ENCODE measurements at regions of chr3 and their contacts with region 1.

Region 1: DNA sequence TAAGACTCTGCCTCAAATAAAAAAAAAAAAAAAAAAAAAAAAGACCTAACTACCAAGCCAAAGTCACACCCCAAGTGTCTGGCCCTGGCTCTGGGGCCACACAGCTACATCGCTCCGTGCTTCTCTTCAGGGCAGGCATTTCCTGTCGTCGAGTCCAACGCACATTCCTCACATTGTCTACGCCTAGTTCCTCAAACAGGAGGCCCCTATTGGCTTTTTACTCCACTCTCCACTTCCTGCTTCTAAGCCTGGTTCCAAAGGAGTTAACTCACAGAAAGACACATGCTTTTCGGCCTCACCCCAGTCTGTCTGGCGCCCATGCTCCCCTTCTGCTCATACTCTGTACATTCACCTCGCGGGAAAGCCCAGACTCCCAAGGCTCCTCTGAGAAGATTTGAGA is 28.8 kb downstream of the KNG1 start:
- DNase-seq: peak in 1 of 2 donors; percentile 26
- ATAC-seq: peak; percentile 64 to 94 (median 80)
- H3K4me3 ChIP-seq: no peak overlapping the region
- H3K27ac ChIP-seq: no peak overlapping the region
- H3K4me1 ChIP-seq: peaks cover 0 to 7% (median 0%) of the 10 kb centered on the region in 9 donors
- H3K27me3 ChIP-seq: no peaks in the 10 kb centered on the region
- CTCF ChIP-seq: no peak

Region 2: GRCh38 chr3:186625600-186626042 is 120.4 kb before region 1 on chr3:
- intact Hi-C with region 1: loop called in 1 of 10 experiments (anchors 10 kb)
- DNase-seq: no peak
- ATAC-seq: no peak
- H3K4me3 ChIP-seq: no peak overlapping the region
- H3K27ac ChIP-seq: no peak overlapping the region
- H3K4me1 ChIP-seq: no peaks in the 10 kb centered on the region
- H3K27me3 ChIP-seq: peaks cover 0 to 5% (median 0%) of the 10 kb centered on the region in 7 donors
- CTCF ChIP-seq: no peak

Measured in heart right ventricle (tissue), 16 donors.